Activated B cell treated with CpG ODN at 0.5 μM for 24 hours (primary cell): ENCODE measurements at regions of chr6 and their contacts with region 1.

Region 1: DNA sequence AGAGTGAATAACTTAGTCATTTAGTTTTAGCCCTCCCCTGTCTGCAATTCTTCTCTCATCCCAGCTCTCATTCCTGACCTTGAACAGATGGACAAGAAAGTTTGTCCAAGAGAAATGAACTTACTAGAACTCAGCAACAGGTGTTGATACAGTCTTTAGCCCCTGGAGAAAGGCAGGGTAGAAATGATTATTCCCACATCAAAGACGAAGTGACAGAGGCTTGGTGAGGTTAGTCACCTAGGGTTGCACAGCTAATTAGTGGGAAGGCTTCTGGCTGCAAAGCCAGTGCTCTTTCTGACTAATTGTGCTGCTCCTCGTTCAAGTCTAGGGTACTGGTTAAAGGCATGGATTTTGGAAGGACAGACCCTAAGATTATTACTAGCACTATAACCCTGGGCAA is 4.5 kb downstream of the ZDHHC14 start:
- DNase-seq: no peak
- ATAC-seq: no peak
- H3K4me3 Mint-ChIP-seq: no peak overlapping the region
- H3K27ac Mint-ChIP-seq: peak overlapping the region; percentile 54
- H3K4me1 Mint-ChIP-seq: peaks cover 40% of the 10 kb centered on the region
- H3K27me3 Mint-ChIP-seq: no peaks in the 10 kb centered on the region
- CTCF ChIP-seq: no peak

Region 2: DNA sequence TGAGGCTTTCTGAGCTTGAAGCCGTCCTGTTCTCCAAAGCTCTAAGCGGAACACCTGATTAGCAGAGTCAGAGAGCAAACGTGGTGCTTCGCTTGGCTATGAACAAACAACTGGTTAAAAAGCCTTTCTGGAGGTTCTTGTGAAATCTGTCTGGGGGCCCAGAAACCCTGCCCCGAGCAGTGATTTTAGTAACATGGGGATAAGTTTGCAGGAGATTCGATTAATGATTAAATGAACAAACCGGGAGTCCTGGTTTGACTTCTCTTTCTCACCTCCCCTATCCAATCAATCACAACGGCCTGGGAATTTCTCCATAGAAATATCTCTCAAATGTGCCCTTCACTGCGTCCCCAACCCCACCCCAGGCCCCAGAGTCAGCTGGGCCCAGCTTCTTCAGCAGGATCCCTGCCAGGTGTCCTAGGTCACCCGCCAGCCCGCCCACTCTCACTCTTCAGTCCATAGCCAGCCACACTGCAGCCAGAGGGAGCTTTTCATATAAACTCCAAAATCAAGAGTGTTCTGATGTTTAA is 39.1 kb after region 1 on chr6:
- CTCF ChIA-PET with region 1: no interaction called
- POLR2A ChIA-PET with region 1: no interaction called
- intact Hi-C with region 1: loop called (anchors 5 kb)
- DNase-seq: no peak
- ATAC-seq: no peak
- H3K4me3 Mint-ChIP-seq: no peak overlapping the region
- H3K27ac Mint-ChIP-seq: no peak overlapping the region
- H3K4me1 Mint-ChIP-seq: peaks cover 37% of the 10 kb centered on the region
- H3K27me3 Mint-ChIP-seq: no peaks in the 10 kb centered on the region
- CTCF ChIP-seq: no peak